AG04450 (cell line): ENCODE measurements at regions of chr4 and their contacts with region 1.

Region 1: DNA sequence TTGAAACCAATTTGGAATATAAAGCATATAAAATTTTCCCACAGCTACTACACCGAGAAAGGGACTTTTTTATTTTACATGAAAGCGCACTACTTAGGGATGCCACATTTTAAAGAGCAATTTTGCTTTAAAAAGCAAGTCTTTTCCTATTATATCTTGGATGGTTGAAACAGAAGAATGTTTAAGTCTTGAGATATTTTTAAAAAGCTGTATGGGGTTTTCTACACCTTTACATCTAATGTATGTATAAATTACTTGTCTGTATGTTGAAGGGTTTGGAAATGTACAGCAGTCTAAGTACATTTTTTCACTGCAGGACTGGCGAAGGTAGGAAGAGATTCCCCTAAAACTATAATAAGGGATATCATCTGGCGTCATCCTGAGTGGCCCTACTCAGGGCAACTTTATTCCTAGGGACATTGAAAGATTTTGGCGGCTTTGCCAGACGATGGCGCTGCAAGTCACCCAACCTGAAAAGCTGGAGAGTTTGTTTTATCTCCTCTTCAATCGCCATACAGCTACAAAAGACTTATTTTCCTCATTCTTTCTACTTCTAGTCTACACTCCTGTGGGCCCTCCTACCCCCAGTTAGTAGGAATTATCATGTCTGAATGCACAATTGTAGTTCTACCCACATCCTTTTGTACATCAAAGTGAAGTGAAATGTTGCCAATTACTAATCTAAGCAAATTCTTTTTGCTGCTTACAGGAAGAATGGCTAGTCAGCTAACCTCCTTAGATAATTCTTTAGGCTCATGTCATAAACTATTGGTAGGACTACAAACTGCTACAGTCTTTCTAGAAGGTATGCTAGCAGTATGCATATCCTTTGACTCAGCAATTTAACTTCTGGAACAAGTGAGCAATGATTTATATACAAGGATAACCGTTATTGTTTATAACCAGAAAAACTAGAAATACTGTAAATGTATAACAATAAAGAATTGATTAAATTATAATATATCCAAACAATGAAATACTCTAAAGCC is 782 bp upstream of the NEK1 start:
- DNase-seq: no peak
- H3K4me3 ChIP-seq: peak overlapping the region; percentile 95
- H3K27ac ChIP-seq: no peak overlapping the region
- H3K27me3 ChIP-seq: no peaks in the 10 kb centered on the region
- CTCF ChIP-seq: peak; percentile 79

Region 2: GRCh38 chr4:169040559-169041261 is 572.5 kb before region 1 on chr4:
- CTCF ChIA-PET with region 1: interaction called, 10 read pairs
- POLR2A ChIA-PET with region 1: no interaction called
- DNase-seq: no peak
- H3K4me3 ChIP-seq: no peak overlapping the region
- H3K27ac ChIP-seq: no peak overlapping the region
- H3K27me3 ChIP-seq: no peaks in the 10 kb centered on the region
- CTCF ChIP-seq: no peak

Region 3: DNA sequence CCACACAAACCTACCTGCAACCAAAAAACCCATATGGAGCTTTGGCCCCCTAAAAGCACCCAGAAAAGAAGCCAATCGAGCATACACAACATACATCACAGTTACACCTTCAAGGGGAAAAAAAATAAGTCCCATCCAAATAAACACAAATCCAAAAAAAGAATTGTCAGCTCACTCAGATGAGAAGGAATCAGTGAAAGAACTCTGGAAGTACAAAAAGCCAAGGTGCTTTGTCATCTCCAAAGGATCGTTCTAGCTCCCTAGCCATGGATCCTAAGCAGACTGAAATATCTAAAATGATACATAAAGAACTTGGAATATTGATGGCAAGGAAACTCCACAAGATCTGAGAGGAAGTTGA is 120.0 kb before region 1 on chr4:
- CTCF ChIA-PET with region 1: no interaction called
- POLR2A ChIA-PET with region 1: no interaction called
- DNase-seq: no peak
- H3K4me3 ChIP-seq: no peak overlapping the region
- H3K27ac ChIP-seq: no peak overlapping the region
- H3K27me3 ChIP-seq: no peaks in the 10 kb centered on the region
- CTCF ChIP-seq: no peak

Region 4: GRCh38 chr4:169627307-169627706 is 14.1 kb after region 1 on chr4:
- CTCF ChIA-PET with region 1: interaction called, 10 read pairs
- POLR2A ChIA-PET with region 1: no interaction called
- DNase-seq: no peak
- H3K4me3 ChIP-seq: no peak overlapping the region
- H3K27ac ChIP-seq: no peak overlapping the region
- H3K27me3 ChIP-seq: no peaks in the 10 kb centered on the region
- CTCF ChIP-seq: no peak

Region 5: GRCh38 chr4:169659716-169660670 is 46.8 kb after region 1 on chr4:
- CTCF ChIA-PET with region 1: interaction called, 22 read pairs
- POLR2A ChIA-PET with region 1: no interaction called
- DNase-seq: peak; percentile 90
- H3K4me3 ChIP-seq: peak overlapping the region; percentile 64
- H3K27ac ChIP-seq: peak overlapping the region; percentile 68
- H3K27me3 ChIP-seq: no peaks in the 10 kb centered on the region
- CTCF ChIP-seq: no peak

Region 6: DNA sequence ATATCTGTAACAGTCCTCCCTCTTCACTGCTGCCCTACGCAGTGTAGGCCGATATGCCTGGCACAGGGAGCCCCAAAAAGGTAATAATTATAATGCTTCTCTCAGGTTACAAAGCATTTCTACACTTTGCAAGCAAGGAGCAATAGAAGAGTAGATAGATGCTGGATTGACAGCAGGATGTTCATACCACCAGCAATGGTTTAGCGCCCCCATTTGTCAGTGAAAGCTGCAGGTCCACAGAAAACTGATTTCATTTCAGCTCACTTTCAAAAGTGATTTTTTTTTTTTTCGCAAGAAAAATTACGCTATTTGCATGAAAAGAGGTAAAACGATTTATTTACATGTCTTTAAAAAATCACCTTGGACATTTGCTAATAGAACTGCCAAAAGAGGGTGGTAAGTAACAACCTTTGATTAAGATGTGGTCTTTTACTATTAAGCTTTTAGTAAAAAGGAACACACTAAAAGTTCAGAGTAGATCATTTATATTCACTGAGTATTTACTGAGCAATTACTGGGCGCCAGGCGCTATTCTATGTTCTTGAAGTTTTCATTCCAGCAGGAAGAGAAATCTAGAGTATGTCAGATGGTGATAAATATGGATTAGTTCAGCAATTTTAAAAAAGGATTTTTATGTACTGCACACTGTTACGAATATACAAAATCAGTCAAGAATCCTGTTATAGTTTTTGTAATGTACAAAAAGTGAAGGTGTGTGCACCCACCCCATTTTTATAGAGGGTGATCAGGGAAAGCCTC is 110.2 kb after region 1 on chr4:
- CTCF ChIA-PET with region 1: interaction called, 18 read pairs
- POLR2A ChIA-PET with region 1: no interaction called
- DNase-seq: no peak
- H3K4me3 ChIP-seq: no peak overlapping the region
- H3K27ac ChIP-seq: no peak overlapping the region
- H3K27me3 ChIP-seq: no peaks in the 10 kb centered on the region
- CTCF ChIP-seq: peak; percentile 39

Region 7: GRCh38 chr4:169791527-169792156 is 178.5 kb after region 1 on chr4:
- CTCF ChIA-PET with region 1: interaction called, 16 read pairs
- POLR2A ChIA-PET with region 1: no interaction called
- DNase-seq: no peak
- H3K4me3 ChIP-seq: peak overlapping the region; percentile 48
- H3K27ac ChIP-seq: no peak overlapping the region
- H3K27me3 ChIP-seq: peaks cover 10% of the 10 kb centered on the region
- CTCF ChIP-seq: peak; percentile 66